B cell (primary cell): ENCODE measurements at regions of chrX and their contacts with region 1.

Region 1: GRCh38 chrX:119529345-119530276 is 35.6 kb downstream of the STEEP1 start:
- DNase-seq: peak; percentile 53
- ATAC-seq: peak; percentile 64
- H3K4me3 ChIP-seq: peak overlapping the region in 2 of 5 experiments; percentile 25 to 39
- H3K4me3 Mint-ChIP-seq: peak overlapping the region; percentile 46
- H3K27ac ChIP-seq: peak overlapping the region; percentile 5 to 65
- H3K27ac Mint-ChIP-seq: peak overlapping the region; percentile 76
- H3K4me1 ChIP-seq: peaks cover 9 to 21% of the 10 kb centered on the region in 2 donors
- H3K4me1 Mint-ChIP-seq: peaks cover 22% of the 10 kb centered on the region
- H3K27me3 ChIP-seq: no peaks in the 10 kb centered on the region
- H3K27me3 Mint-ChIP-seq: no peaks in the 10 kb centered on the region
- CTCF ChIP-seq: no peak

Region 2: DNA sequence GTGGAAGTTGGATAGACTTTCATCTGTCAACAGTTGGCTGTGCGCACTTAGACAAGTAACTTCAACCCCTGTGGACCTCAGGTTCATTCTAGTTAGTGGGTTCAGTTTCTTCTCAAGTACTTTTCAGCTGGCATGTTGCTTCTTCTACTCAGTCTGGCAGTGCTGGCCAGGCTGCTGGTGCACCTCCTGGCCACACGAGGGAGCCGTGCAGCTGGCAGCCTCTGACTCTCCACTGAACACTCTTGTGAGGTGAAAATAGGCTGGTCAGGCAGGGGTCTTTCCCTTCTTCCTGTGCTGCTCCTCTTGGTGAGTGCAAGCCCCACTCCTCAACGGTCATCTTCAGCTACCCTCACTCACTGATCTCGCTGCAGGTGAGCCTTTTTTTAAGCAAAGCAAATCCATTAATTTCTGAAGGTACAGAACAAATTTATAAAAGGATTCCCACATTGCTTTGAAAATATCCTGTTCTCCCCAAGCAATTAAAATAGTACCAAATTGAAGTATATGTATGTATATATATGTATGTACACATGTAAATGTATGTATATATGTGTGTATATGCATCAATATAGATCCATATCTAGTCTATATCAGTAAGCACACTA is 524.6 kb before region 1 on chrX:
- CTCF ChIA-PET with region 1: no interaction called
- POLR2A ChIA-PET with region 1: no interaction called
- intact Hi-C with region 1: no loop called
- DNase-seq: peak; percentile 57
- ATAC-seq: peak; percentile 84
- H3K4me3 ChIP-seq: no peak overlapping the region
- H3K4me3 Mint-ChIP-seq: no peak overlapping the region
- H3K27ac ChIP-seq: no peak overlapping the region
- H3K27ac Mint-ChIP-seq: no peak overlapping the region
- H3K4me1 ChIP-seq: no peaks in the 10 kb centered on the region
- H3K4me1 Mint-ChIP-seq: no peaks in the 10 kb centered on the region
- H3K27me3 ChIP-seq: no peaks in the 10 kb centered on the region
- H3K27me3 Mint-ChIP-seq: peaks cover 3% of the 10 kb centered on the region
- CTCF ChIP-seq: peak; percentile 82

Region 3: GRCh38 chrX:119477812-119478232 is 51.8 kb before region 1 on chrX:
- CTCF ChIA-PET with region 1: no interaction called
- POLR2A ChIA-PET with region 1: no interaction called
- intact Hi-C with region 1: no loop called
- DNase-seq: no peak
- ATAC-seq: no peak
- H3K4me3 ChIP-seq: no peak overlapping the region
- H3K4me3 Mint-ChIP-seq: no peak overlapping the region
- H3K27ac ChIP-seq: no peak overlapping the region
- H3K27ac Mint-ChIP-seq: no peak overlapping the region
- H3K4me1 ChIP-seq: peaks cover 5 to 11% of the 10 kb centered on the region in 2 donors
- H3K4me1 Mint-ChIP-seq: peaks cover 5% of the 10 kb centered on the region
- H3K27me3 ChIP-seq: no peaks in the 10 kb centered on the region
- H3K27me3 Mint-ChIP-seq: no peaks in the 10 kb centered on the region
- CTCF ChIP-seq: no peak

Region 4: GRCh38 chrX:119541188-119541587 is 11.6 kb after region 1 on chrX:
- CTCF ChIA-PET with region 1: no interaction called
- POLR2A ChIA-PET with region 1: no interaction called
- intact Hi-C with region 1: loop called (anchors 2 kb)
- DNase-seq: no peak
- ATAC-seq: no peak
- H3K4me3 ChIP-seq: no peak overlapping the region
- H3K4me3 Mint-ChIP-seq: no peak overlapping the region
- H3K27ac ChIP-seq: no peak overlapping the region
- H3K27ac Mint-ChIP-seq: no peak overlapping the region
- H3K4me1 ChIP-seq: no peaks in the 10 kb centered on the region
- H3K4me1 Mint-ChIP-seq: no peaks in the 10 kb centered on the region
- H3K27me3 ChIP-seq: no peaks in the 10 kb centered on the region
- H3K27me3 Mint-ChIP-seq: no peaks in the 10 kb centered on the region
- CTCF ChIP-seq: no peak

Region 5: DNA sequence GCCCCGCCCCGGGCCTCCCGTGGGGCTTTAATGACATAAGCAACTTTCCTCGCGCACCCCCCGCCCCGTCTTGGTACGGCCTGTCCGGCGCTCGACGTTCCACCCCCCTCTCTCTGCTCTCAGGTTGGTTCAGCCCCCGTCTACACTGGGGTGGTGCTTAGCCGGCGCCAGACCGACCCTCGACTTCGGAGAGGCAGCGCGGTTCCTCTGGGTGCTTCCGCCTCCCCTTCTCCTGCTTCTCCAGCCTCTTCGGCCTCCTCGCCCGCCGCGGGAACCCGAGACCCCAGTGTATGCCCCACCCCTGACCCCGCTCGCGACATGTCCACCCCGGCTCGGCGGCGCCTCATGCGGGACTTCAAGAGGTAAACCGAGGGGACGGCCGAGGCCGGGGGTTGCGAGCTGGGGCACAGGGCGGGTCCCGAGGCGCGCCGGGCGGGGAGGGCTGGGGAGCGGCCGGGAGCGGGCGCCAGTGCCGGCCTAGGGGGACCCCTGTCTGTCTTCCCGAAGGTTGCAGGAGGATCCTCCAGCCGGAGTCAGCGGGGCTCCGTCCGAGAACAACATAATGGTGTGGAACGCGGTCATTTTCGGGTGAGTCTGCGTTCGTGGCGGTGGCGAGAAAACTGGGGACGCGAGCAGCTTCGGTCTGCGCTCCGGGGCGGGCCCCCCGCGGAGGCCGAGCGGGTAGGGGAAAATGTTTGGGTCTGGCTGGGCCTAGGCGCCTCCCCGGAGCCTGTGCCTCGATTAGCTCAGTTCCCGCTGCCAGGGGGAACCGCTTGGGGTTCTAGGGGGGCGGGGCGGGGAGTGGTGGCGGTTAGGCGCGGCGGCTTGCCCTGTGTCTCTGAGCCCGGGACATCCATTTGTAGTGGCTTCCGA is 45.0 kb after region 1 on chrX and contains the start of gene UBE2A:
- CTCF ChIA-PET with region 1: no interaction called
- POLR2A ChIA-PET with region 1: interaction called, 10 read pairs
- intact Hi-C with region 1: no loop called
- DNase-seq: peak; percentile 94
- ATAC-seq: peak; percentile 94
- H3K4me3 ChIP-seq: peak within 1 kb of the TSS; percentile 42 to 77 (median 70)
- H3K4me3 Mint-ChIP-seq: peak within 1 kb of the TSS; percentile 88
- H3K27ac ChIP-seq: peak within 1 kb of the TSS; percentile 68 to 83
- H3K27ac Mint-ChIP-seq: peak within 1 kb of the TSS; percentile 88
- H3K4me1 ChIP-seq: peaks cover 26 to 32% of the 10 kb centered on the region in 2 donors
- H3K4me1 Mint-ChIP-seq: peaks cover 34% of the 10 kb centered on the region
- H3K27me3 ChIP-seq: no peaks in the 10 kb centered on the region
- H3K27me3 Mint-ChIP-seq: no peaks in the 10 kb centered on the region
- CTCF ChIP-seq: no peak
- total RNA-seq, gene UBE2A: 67.1 and 70.9 TPM in 2 replicates

Region 6: GRCh38 chrX:119655125-119655524 is 125.5 kb after region 1 on chrX:
- CTCF ChIA-PET with region 1: no interaction called
- POLR2A ChIA-PET with region 1: no interaction called
- intact Hi-C with region 1: no loop called
- DNase-seq: no peak
- ATAC-seq: no peak
- H3K4me3 ChIP-seq: no peak overlapping the region
- H3K4me3 Mint-ChIP-seq: no peak overlapping the region
- H3K27ac ChIP-seq: peak overlapping the region in 1 of 2 donors; percentile 53
- H3K27ac Mint-ChIP-seq: peak overlapping the region; percentile 1
- H3K4me1 ChIP-seq: no peaks in the 10 kb centered on the region
- H3K4me1 Mint-ChIP-seq: peaks cover 11% of the 10 kb centered on the region
- H3K27me3 ChIP-seq: no peaks in the 10 kb centered on the region
- H3K27me3 Mint-ChIP-seq: no peaks in the 10 kb centered on the region
- CTCF ChIP-seq: no peak